PC-9 (cell line): ENCODE measurements at regions of chr11 and their contacts with region 1.

Region 1: GRCh38 chr11:73198677-73199076 is 19.4 kb upstream of the P2RY2 start:
- DNase-seq: peak in 1 of 2 experiments; percentile 96
- H3K4me3 ChIP-seq: no peak overlapping the region
- H3K27ac ChIP-seq: peak overlapping the region; percentile 99
- H3K4me1 ChIP-seq: peaks cover 98% of the 10 kb centered on the region
- H3K27me3 ChIP-seq: no peaks in the 10 kb centered on the region
- CTCF ChIP-seq: no peak

Region 2: DNA sequence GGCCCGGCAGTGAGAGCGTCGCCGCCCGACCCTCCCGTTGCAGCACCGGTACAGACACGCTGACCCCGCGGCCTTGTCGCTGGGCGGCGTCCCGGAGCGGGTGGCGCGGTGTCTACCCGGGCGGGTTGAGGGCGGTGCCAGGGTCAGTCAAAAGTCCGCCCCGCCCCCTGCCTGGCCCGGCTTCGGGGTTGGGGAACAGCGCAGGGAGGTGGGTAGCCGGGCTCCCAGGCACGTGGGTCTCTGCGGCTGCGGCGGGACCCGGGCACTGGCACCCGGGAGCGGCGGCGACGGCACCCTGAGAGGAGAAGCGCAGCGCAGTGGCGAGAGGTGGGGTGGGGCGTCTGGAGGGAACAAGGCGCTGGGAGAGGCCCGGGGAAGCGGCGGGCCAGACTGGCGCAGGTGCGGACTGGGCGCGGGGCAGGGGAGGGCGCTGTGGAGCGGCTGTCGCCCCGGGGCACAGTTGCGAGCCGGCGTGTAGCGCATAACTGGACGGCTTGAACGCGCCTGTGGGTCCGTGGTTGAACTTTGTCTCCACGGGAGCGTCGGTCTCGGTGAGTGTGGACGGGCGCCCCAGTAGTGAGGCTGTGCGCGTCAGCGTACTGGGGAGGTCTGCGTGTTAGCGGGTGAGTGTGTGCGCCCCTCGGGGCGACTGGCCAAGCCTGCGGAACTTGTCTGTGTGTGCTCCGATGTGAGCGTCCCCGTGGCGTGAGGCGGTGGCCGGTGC is 19.6 kb after region 1 on chr11 and contains the start of gene P2RY2:
- CTCF ChIA-PET with region 1: interaction called, 5 read pairs
- POLR2A ChIA-PET with region 1: interaction called, 5 read pairs
- intact Hi-C with region 1: loop called (anchors 1 kb)
- DNase-seq: peak; percentile 73 to 93
- H3K4me3 ChIP-seq: peak within 1 kb of the TSS; percentile 69
- H3K27ac ChIP-seq: peak within 1 kb of the TSS; percentile 46
- H3K4me1 ChIP-seq: peaks cover 44% of the 10 kb centered on the region
- H3K27me3 ChIP-seq: no peaks in the 10 kb centered on the region
- CTCF ChIP-seq: peak; percentile 64
- total RNA-seq, gene P2RY2: 19.8 and 22.5 TPM in 2 replicates

Region 3: DNA sequence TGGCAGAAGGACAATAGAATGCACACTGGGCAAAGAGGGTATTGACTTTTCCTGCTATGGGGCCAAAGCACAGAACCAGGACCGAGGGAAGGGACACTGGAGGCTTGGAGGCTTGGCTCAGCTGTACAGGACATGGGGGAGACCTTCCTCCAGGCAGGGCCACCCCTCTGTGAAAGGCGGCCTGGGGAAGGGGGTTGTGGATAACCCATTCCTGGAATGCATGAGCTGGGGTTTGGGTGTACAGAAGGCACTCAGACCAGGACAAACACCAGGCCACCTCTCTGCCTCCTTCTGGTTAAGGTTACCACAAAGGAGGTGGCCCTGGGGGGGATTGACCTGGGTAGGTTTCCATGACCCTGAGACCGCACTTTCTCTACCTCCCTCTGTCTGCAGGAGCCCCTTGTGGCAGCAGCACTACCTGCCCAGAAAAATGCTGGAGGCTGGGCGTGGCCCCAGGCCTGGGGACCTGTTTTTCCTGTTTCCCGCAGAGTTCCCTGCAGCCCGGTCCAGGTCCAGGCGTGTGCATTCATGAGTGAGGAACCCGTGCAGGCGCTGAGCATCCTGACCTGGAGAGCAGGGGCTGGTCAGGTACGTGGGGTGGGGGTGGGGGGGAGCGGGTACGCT is 29.0 kb after region 1 on chr11:
- CTCF ChIA-PET with region 1: interaction called, 3 read pairs
- POLR2A ChIA-PET with region 1: no interaction called
- intact Hi-C with region 1: loop called (anchors 1 kb)
- DNase-seq: peak; percentile 90 to 97
- H3K4me3 ChIP-seq: 0 out of 2 replicates have a peak overlapping the region, but pooled peaks have one; percentile 2
- H3K27ac ChIP-seq: peak overlapping the region; percentile 50
- H3K4me1 ChIP-seq: peaks cover 49% of the 10 kb centered on the region
- H3K27me3 ChIP-seq: no peaks in the 10 kb centered on the region
- CTCF ChIP-seq: peak; percentile 69

Region 4: GRCh38 chr11:73271936-73272719 is 73.5 kb after region 1 on chr11 and contains the start of gene P2RY6:
- CTCF ChIA-PET with region 1: interaction called, 3 read pairs
- POLR2A ChIA-PET with region 1: no interaction called
- intact Hi-C with region 1: loop called (anchors 1 kb)
- DNase-seq: peak; percentile 84 to 99
- H3K4me3 ChIP-seq: peak within 1 kb of the TSS; percentile 80
- H3K27ac ChIP-seq: peak within 1 kb of the TSS; percentile 85
- H3K4me1 ChIP-seq: peaks cover 74% of the 10 kb centered on the region
- H3K27me3 ChIP-seq: no peaks in the 10 kb centered on the region
- CTCF ChIP-seq: no peak
- total RNA-seq, gene P2RY6: 29.7 and 34.7 TPM in 2 replicates